H1 (cell line): ENCODE measurements at regions of chr14 and their contacts with region 1.

Region 1: GRCh38 chr14:95774265-95775160 is 60.6 kb upstream of the TCL1A start:
- DNase-seq: peak in 1 of 2 experiments; percentile 87
- H3K4me3 ChIP-seq: no peak overlapping the region
- H3K27ac ChIP-seq: no peak overlapping the region
- H3K4me1 ChIP-seq: peaks cover 0 to 4% (median 0%) of the 10 kb centered on the region in 4 experiments; a peak in 2 of 7 replicates
- H3K27me3 ChIP-seq: peaks cover 0 to 19% (median 9%) of the 10 kb centered on the region in 4 experiments; a peak in 4 of 7 replicates
- CTCF ChIP-seq: peak; percentile 49 to 92 (median 69)
- EP300 ChIP-seq: no peak
- POLR2A ChIP-seq: no peak
- RAD21 ChIP-seq: peak; percentile 75 to 83

Region 2: GRCh38 chr14:95555053-95555452 is 219.5 kb before region 1 on chr14:
- CTCF ChIA-PET with region 1: interaction called, 10 read pairs
- POLR2A ChIA-PET with region 1: no interaction called
- DNase-seq: no peak
- H3K4me3 ChIP-seq: no peak overlapping the region
- H3K27ac ChIP-seq: no peak overlapping the region
- H3K4me1 ChIP-seq: peaks cover 0 to 3% (median 0%) of the 10 kb centered on the region in 4 experiments; a peak in 6 of 7 replicates
- H3K27me3 ChIP-seq: peaks cover 0 to 2% (median 0%) of the 10 kb centered on the region in 4 experiments; a peak in 4 of 7 replicates
- CTCF ChIP-seq: no peak
- EP300 ChIP-seq: no peak
- POLR2A ChIP-seq: no peak
- RAD21 ChIP-seq: no peak

Region 3: GRCh38 chr14:95621513-95621912 is 153.0 kb before region 1 on chr14:
- CTCF ChIA-PET with region 1: no interaction called
- POLR2A ChIA-PET with region 1: no interaction called
- DNase-seq: no peak
- H3K4me3 ChIP-seq: no peak overlapping the region
- H3K27ac ChIP-seq: no peak overlapping the region
- H3K4me1 ChIP-seq: peaks cover 0 to 21% (median 8%) of the 10 kb centered on the region in 4 experiments; a peak in 4 of 7 replicates
- H3K27me3 ChIP-seq: peaks cover 0 to 2% (median 0%) of the 10 kb centered on the region in 4 experiments; a peak in 1 of 7 replicates
- CTCF ChIP-seq: no peak
- EP300 ChIP-seq: no peak
- POLR2A ChIP-seq: no peak
- RAD21 ChIP-seq: no peak

Region 4: GRCh38 chr14:95635060-95635459 is 139.5 kb before region 1 on chr14:
- CTCF ChIA-PET with region 1: interaction called, 13 read pairs
- POLR2A ChIA-PET with region 1: no interaction called
- DNase-seq: no peak
- H3K4me3 ChIP-seq: no peak overlapping the region
- H3K27ac ChIP-seq: no peak overlapping the region
- H3K4me1 ChIP-seq: no peaks in the 10 kb centered on the region
- H3K27me3 ChIP-seq: no peaks in the 10 kb centered on the region
- CTCF ChIP-seq: no peak
- EP300 ChIP-seq: no peak
- POLR2A ChIP-seq: no peak
- RAD21 ChIP-seq: no peak

Region 5: DNA sequence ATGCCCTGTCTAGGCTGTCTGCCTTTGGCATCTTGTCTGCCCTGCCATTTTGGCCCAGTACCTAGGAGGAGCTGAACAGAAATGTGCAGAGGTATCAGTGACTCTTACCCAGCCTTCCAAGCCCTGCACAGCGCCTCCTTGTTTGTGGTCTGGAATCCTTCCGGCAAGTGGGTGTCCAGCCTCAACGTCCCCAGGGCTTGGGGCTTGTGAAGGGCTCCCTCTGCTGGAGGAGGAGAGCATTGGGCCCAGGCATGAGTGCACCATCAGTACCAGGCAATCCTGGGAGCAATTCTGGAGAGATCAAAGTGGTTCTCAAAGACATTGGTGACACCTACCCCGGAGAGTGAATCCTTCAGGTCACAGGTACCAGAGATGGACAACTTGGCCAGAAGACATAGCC is 90.7 kb before region 1 on chr14:
- CTCF ChIA-PET with region 1: interaction called, 18 read pairs
- POLR2A ChIA-PET with region 1: no interaction called
- DNase-seq: peak in 1 of 2 experiments; percentile 74
- H3K4me3 ChIP-seq: no peak overlapping the region
- H3K27ac ChIP-seq: no peak overlapping the region
- H3K4me1 ChIP-seq: peaks cover 6 to 13% (median 9%) of the 10 kb centered on the region in 4 experiments
- H3K27me3 ChIP-seq: peaks cover 0 to 3% (median 0%) of the 10 kb centered on the region in 4 experiments; a peak in 3 of 7 replicates
- CTCF ChIP-seq: peak; percentile 94 to 97 (median 95)
- EP300 ChIP-seq: no peak
- POLR2A ChIP-seq: no peak
- RAD21 ChIP-seq: peak; percentile 91 to 94

Region 6: DNA sequence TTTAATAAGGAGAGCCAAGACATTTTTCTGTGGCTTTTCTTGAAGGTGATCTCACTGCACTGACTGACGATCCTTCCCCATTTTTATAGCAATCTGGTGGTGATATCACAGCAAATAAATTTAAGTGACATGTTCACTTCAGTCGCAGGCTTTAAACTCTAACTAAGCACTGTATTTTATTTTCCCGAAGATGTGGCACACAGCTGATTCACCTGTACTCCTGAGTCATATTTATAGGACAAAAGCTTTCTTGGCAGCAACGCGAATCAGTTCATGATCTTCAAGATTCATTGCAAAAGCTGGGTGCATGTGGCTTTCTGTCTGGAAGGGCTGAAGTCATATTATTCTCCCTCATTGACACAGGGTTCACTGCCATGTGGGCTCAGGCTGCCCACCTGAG is 22.3 kb after region 1 on chr14:
- CTCF ChIA-PET with region 1: interaction called, 10 read pairs
- POLR2A ChIA-PET with region 1: no interaction called
- DNase-seq: no peak
- H3K4me3 ChIP-seq: no peak overlapping the region
- H3K27ac ChIP-seq: no peak overlapping the region
- H3K4me1 ChIP-seq: peaks cover 0 to 4% (median 0%) of the 10 kb centered on the region in 4 experiments; a peak in 2 of 7 replicates
- H3K27me3 ChIP-seq: no peaks in the 10 kb centered on the region
- CTCF ChIP-seq: no peak
- EP300 ChIP-seq: no peak
- POLR2A ChIP-seq: no peak
- RAD21 ChIP-seq: no peak

Region 7: GRCh38 chr14:95850417-95850816 is 75.9 kb after region 1 on chr14:
- CTCF ChIA-PET with region 1: interaction called, 10 read pairs
- POLR2A ChIA-PET with region 1: no interaction called
- DNase-seq: no peak
- H3K4me3 ChIP-seq: no peak overlapping the region
- H3K27ac ChIP-seq: no peak overlapping the region
- H3K4me1 ChIP-seq: peaks cover 0 to 6% (median 0%) of the 10 kb centered on the region in 4 experiments; a peak in 1 of 7 replicates
- H3K27me3 ChIP-seq: no peaks in the 10 kb centered on the region; a peak in 1 of 7 replicates
- CTCF ChIP-seq: no peak
- EP300 ChIP-seq: no peak
- POLR2A ChIP-seq: no peak
- RAD21 ChIP-seq: peak; percentile 40 to 41